ENCODE measurements at regions of chr7 and their contacts with region 1.

Region 1: GRCh38 chr7:127708788-127709187 is 56.8 kb downstream of the SND1 start:
- DNase-seq: peak; percentile 38 to 53
- ATAC-seq: peak; percentile 73 to 85
- H3K4me3 ChIP-seq: no peak overlapping the region
- H3K27ac ChIP-seq: no peak overlapping the region
- H3K4me1 ChIP-seq: peaks cover 0 to 4% of the 10 kb centered on the region in 2 donors
- H3K27me3 ChIP-seq: no peaks in the 10 kb centered on the region
- CTCF ChIP-seq: peak; percentile 57 to 77 (median 71)
- POLR2A ChIP-seq: no peak

Region 2: GRCh38 chr7:127667017-127667670 is 41.6 kb before region 1 on chr7:
- in situ Hi-C with region 1: no loop called
- intact Hi-C with region 1: no loop called
- DNase-seq: no peak
- ATAC-seq: no peak
- H3K4me3 ChIP-seq: no peak overlapping the region
- H3K27ac ChIP-seq: no peak overlapping the region
- H3K4me1 ChIP-seq: no peaks in the 10 kb centered on the region
- H3K27me3 ChIP-seq: no peaks in the 10 kb centered on the region
- CTCF ChIP-seq: no peak
- POLR2A ChIP-seq: no peak

Region 3: DNA sequence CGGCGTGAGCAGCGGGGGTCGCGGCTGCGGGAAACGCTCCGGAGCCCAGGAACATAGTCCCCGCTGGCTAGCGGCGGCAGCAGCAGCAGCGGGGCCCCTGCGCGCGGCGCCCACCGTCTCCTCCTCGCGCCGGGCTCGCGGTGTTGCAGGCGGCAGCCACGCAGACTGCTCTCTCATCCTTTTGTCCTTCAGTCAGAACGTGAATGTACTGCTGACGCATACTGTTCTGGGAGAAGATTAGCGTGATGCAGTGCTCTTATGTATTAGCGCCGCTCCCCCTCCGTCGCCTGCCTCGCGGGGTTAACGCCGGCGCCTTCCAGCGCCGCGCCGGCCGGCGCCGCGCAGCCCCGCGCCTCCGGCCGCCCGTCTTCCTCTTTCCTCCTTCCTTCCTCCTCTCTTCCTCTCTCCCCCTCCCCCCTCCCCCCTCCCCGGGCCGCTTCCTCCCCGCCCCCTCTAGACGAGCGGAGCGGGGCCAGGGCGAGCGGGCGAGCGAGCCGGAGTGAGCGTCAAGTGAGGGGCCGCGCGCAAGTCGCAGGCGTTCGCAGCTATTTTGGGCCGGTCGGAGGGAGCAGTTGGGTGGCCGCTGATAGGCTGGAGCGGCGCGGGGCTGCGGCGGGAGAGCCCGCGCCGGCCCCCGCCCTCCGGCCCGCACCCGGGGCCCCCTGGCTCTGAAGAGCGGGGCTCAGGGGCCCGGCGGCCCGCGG is 323.3 kb after region 1 on chr7:
- in situ Hi-C with region 1: no loop called
- intact Hi-C with region 1: loop called (anchors 5 kb)
- DNase-seq: peak in 1 of 2 donors; percentile 25
- ATAC-seq: peak; percentile 80 to 90
- H3K4me3 ChIP-seq: peak overlapping the region; percentile 45 to 70 (median 56)
- H3K27ac ChIP-seq: no peak overlapping the region
- H3K4me1 ChIP-seq: peaks cover 3 to 8% of the 10 kb centered on the region in 2 donors
- H3K27me3 ChIP-seq: peaks cover 0 to 3% (median 0%) of the 10 kb centered on the region in 3 donors
- CTCF ChIP-seq: peak in 2 of 5 experiments; percentile 13 to 30
- POLR2A ChIP-seq: peak; percentile 22 to 23

Region 4: GRCh38 chr7:128135515-128136214 is 426.9 kb after region 1 on chr7:
- in situ Hi-C with region 1: no loop called
- intact Hi-C with region 1: loop called (anchors 2 kb)
- DNase-seq: no peak
- ATAC-seq: peak; percentile 91 to 92
- H3K4me3 ChIP-seq: peak overlapping the region; percentile 45 to 71 (median 54)
- H3K27ac ChIP-seq: no peak overlapping the region
- H3K4me1 ChIP-seq: peaks cover 0 to 13% of the 10 kb centered on the region in 2 donors
- H3K27me3 ChIP-seq: peaks cover 30 to 54% (median 44%) of the 10 kb centered on the region in 3 donors
- CTCF ChIP-seq: peak; percentile 57 to 98 (median 85)
- POLR2A ChIP-seq: no peak